ENCODE measurements at regions of chr16 and their contacts with region 1.

Region 1: GRCh38 chr16:70402916-70403659 is 35.8 kb downstream of the ST3GAL2 start:
- DNase-seq: no peak
- ATAC-seq: no peak
- H3K4me3 ChIP-seq: no peak overlapping the region
- H3K4me3 Mint-ChIP-seq: peak overlapping the region in 1 of 3 donors; percentile 70
- H3K27ac ChIP-seq: no peak overlapping the region
- H3K27ac Mint-ChIP-seq: peak overlapping the region; percentile 28 to 41
- H3K4me1 ChIP-seq: peaks cover 8 to 48% of the 10 kb centered on the region in 2 experiments
- H3K4me1 Mint-ChIP-seq: peaks cover 52 to 58% (median 55%) of the 10 kb centered on the region in 3 donors
- H3K27me3 ChIP-seq: no peaks in the 10 kb centered on the region
- H3K27me3 Mint-ChIP-seq: no peaks in the 10 kb centered on the region

Region 2: DNA sequence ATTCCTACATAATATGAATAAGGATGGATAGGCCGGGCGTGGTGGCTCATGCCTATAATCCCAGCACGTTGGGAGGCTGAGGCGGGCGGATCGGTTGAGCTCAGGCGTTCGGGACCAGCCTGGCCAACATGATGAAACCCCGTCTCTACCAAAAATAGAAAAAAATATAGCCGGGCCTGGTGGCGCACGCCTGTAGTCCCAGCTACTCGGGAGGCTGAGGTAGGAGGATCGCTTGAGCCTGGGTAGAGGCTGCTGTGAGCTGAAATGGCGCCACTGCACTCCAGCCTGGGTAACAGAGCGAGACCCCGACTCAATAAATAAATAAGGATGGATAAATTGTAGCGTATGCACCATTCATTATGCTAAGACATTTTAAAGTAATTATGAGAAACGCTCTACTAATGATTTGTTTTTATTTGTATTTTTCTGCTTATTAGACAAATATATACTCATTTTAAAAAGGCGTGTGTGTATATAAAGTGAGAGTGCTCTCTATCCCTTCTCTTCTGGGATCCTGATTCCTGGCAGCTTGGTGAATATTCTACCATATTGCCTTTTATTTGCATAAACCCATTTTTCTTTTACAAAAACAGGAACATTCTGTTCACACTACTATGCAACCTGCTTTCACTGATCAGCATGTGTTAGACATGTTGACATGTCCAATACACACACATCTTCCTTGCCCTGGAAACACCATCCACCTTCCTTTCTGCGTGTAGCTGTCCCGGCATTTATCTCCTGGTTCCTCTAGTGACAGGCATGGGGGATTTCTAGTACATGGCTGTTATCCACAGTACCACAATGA is 30.0 kb before region 1 on chr16:
- CTCF ChIA-PET with region 1: no interaction called
- POLR2A ChIA-PET with region 1: interaction called in 1 of 2 experiments, 10 read pairs
- DNase-seq: no peak
- ATAC-seq: no peak
- H3K4me3 ChIP-seq: no peak overlapping the region
- H3K4me3 Mint-ChIP-seq: no peak overlapping the region
- H3K27ac ChIP-seq: no peak overlapping the region
- H3K27ac Mint-ChIP-seq: peak overlapping the region; percentile 32 to 75
- H3K4me1 ChIP-seq: peaks cover 0 to 10% of the 10 kb centered on the region in 2 experiments
- H3K4me1 Mint-ChIP-seq: peaks cover 10 to 14% (median 13%) of the 10 kb centered on the region in 3 donors
- H3K27me3 ChIP-seq: no peaks in the 10 kb centered on the region
- H3K27me3 Mint-ChIP-seq: no peaks in the 10 kb centered on the region